ENCODE measurements at regions of chr12 and their contacts with region 1.

Region 1: GRCh38 chr12:6285063-6285477 is 25.4 kb upstream of the PLEKHG6 start:
- DNase-seq: no peak
- H3K4me3 ChIP-seq: no peak overlapping the region
- CTCF ChIP-seq: peak; percentile 73

Region 2: DNA sequence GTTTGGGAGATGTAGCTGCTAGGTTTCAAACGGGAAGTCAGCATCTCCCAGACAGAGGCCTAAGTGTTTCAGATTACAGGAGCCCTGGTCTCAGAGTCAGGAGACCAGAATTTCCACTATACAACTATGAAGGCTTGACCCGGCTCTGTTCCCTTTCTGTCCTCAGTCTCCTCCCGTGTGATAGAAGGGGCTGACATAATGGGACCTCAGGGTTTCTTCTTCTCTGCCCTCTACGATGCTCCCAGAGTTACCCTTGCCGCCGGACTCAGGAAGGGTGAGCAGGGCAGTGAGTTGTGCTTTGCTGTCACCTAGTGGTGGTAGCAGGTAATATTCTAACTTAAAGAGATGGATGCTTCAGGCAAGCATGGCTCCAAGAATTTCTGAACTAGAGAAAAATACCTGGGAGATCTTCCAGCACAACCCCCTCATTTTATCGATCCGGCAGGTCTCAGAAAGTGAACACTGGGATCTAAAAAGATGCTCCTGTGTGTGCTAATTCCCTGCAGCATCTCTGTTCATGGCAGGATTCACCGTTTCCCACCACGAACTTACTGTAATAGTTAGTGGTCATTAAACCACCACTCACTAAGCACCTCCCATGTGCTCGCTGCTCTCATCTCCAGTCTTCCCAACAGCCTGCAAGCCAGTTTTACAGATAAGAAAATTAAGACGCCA is 245.0 kb before region 1 on chr12:
- CTCF ChIA-PET with region 1: interaction called, 55 read pairs
- POLR2A ChIA-PET with region 1: no interaction called
- DNase-seq: no peak
- H3K4me3 ChIP-seq: no peak overlapping the region
- CTCF ChIP-seq: peak; percentile 79

Region 3: DNA sequence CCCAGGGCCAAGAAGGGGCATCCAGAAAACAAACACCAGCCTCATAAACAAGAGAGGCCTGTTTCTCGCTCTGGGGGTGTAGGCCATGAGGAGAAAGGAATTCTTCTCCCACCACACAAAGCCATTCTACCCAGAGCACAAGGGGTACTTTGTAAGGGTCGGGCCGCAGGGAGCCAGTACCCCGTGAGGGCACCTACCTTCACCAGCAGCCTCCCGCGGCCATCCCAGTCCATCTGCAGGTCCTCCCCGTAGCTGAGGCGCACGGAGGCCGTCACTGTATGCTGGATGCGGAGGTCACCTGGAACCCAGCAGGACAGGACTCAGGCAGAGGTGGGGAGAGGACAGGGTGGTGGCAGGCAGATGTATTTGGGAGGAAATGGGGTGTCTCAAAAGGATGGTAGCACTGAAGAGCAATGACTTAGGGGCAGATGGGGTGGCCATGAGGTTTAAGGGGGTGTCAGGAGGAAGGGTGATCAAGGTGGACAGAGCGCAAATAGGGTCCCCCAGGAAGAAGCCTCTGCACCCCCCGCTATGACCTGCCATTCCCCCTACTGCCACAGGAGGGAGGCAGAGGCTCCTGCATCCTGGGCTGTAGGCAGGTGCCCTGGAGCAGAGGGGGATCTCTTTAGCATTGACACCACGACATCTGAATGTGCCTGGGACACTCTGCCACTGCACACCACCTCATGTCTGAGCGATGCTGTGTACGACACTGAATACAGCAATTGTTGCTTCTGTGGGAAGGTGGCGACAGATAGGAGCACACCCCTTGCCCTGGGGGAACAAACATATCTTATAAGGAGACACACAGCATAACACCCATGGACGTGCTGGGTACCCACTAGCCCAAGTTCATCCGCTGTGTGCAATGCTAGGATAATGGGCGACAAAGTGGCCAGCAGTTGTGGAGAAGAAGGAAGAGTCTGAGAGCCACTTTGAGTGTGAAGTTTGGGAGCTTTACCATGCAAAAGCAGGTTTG is 222.0 kb before region 1 on chr12:
- CTCF ChIA-PET with region 1: interaction called, 178 read pairs
- POLR2A ChIA-PET with region 1: interaction called, 3 read pairs
- DNase-seq: no peak
- H3K4me3 ChIP-seq: no peak overlapping the region
- CTCF ChIP-seq: peak; percentile 98

Region 4: GRCh38 chr12:6207259-6207925 is 77.7 kb before region 1 on chr12:
- CTCF ChIA-PET with region 1: interaction called, 269 read pairs
- POLR2A ChIA-PET with region 1: no interaction called
- DNase-seq: no peak
- H3K4me3 ChIP-seq: no peak overlapping the region
- CTCF ChIP-seq: no peak

Region 5: DNA sequence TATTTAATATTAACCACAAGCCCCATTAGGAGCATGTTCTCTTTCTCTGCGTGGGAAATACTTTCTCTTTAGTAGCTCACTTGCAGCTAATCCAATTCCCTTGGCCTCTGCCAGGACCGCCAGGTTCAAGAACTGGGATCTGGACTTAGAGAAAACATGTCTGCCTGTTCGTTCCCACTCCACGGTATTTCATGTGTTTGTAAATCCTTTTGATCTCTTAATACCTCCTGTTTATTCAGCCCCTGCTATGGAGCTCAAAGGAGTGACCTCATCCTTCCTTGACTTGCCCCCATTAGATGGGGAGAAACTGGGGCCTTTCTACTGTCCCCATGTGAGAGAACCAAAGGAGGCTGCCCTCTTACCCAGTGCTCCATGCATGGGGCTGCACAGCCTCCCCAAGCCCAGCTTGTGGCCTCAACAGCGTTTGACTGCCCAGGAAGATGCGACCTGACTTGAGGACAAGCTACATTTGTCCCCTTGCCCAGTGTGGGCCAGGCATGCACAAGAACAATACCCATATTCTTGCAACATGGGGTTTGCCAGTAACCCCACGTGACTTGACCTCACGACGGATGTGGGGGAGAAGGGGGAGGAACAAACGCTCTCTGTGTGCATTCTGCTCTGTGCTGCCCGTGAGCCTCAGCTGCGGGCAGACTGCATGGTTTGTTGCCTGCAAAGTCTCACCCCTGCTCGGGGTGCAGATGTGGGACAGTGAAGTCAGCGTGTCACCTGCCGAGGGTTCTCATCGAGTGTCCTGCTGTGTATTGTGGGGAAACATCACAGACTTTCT is 54.6 kb before region 1 on chr12:
- CTCF ChIA-PET with region 1: interaction called, 39 read pairs
- POLR2A ChIA-PET with region 1: no interaction called
- DNase-seq: no peak
- H3K4me3 ChIP-seq: no peak overlapping the region
- CTCF ChIP-seq: no peak

Region 6: DNA sequence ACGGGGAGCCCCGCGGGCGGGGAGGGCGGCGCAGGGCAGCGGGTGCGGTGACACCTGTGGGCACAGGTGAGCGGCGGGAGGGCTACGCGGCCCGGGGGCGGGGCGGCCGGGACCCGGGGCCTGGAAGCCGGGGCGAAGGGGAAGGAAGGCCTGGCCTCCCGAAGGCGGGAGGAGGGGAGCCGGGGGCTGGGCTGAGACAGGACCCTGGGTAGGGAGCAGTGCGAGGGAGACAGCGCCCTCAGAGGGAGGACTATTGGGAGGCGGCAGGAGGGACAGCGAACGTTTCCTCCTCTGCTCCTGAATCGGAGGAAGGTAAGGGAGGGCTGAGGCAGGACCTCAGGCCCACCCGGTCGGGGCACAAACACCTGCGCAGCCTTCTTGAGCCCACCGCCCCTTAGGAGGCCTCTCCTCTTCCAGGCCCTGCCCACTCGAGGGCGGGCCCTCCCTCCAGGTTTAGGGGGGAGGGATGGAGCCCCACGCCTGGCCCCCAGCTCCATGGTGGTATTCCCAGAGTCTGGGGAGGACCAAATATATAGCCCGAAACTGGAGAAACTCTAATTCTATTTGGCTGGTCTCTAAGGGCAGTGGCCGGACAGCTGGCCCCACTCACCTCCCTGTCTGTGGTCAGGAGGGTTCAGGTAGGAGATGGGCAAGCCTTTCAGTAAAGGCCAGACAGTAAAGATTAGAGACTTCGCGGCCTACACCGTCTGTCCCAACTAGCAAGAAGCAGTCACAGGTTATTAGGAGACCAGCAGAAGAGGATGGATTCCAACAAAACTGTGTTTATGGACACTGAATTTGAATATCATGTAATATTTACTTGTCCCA is 25.9 kb after region 1 on chr12:
- CTCF ChIA-PET with region 1: no interaction called
- POLR2A ChIA-PET with region 1: no interaction called
- DNase-seq: no peak
- H3K4me3 ChIP-seq: peak overlapping the region; percentile 20
- CTCF ChIP-seq: no peak

Region 7: GRCh38 chr12:6355491-6356371 is 70.7 kb after region 1 on chr12:
- CTCF ChIA-PET with region 1: no interaction called
- POLR2A ChIA-PET with region 1: no interaction called
- DNase-seq: no peak
- H3K4me3 ChIP-seq: no peak overlapping the region
- CTCF ChIP-seq: no peak

Measured in AG04449 (cell line).